ENCODE measurements at regions of chr7 and their contacts with region 1.

Region 1: DNA sequence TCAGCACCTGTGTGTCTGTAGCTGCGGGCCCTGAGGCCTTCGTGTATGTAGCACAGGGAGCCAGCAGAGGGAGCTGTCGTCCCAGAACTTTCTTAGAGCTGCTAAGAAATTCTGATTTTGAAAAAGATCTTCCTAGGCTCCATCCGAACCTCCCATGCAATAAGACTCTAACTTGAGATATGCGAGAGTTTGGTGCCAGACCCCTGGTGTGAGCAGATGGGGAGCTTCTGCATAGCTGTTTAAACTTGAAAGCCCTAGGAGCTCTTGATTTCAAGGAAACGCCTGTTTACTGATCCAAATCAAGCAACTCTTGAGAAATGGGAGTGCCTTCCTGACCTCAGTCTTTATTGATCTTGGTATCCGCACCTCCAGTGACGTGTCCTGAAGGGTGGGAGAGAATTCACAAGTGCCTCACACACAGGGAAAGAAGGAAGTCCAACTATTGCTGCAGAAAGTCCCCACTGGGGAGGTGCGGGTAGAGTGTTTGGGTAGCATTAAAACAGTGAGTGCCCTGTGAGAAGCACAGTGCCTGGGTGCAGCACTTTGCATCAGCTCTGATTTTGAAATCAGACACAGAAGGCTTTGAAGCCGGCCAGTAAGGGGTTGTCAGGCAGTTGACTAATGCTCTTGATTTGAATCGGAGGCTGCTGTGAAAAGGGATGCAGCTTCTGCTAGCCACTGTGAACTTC is 66.4 kb upstream of the STRIP2 start:
- DNase-seq: peak; percentile 64 to 91 (median 78)
- H3K4me3 ChIP-seq: peak overlapping the region in 1 of 4 donors; percentile 17
- H3K27ac ChIP-seq: no peak overlapping the region
- H3K4me1 ChIP-seq: peaks cover 0 to 6% of the 10 kb centered on the region in 2 donors
- H3K27me3 ChIP-seq: no peaks in the 10 kb centered on the region
- CTCF ChIP-seq: peak; percentile 71 to 87 (median 84)
- POLR2A ChIP-seq: no peak

Region 2: GRCh38 chr7:129536323-129536722 is 168.5 kb after region 1 on chr7:
- intact Hi-C with region 1: no loop called
- DNase-seq: no peak
- H3K4me3 ChIP-seq: no peak overlapping the region
- H3K27ac ChIP-seq: no peak overlapping the region
- H3K4me1 ChIP-seq: peaks cover 3 to 5% of the 10 kb centered on the region in 2 donors
- H3K27me3 ChIP-seq: no peaks in the 10 kb centered on the region
- CTCF ChIP-seq: no peak
- POLR2A ChIP-seq: no peak

Region 3: GRCh38 chr7:129644634-129645230 is 276.9 kb after region 1 on chr7:
- intact Hi-C with region 1: loop called in 1 of 2 experiments (anchors 10 kb)
- DNase-seq: no peak
- H3K4me3 ChIP-seq: no peak overlapping the region
- H3K27ac ChIP-seq: no peak overlapping the region
- H3K4me1 ChIP-seq: peaks cover 3 to 13% of the 10 kb centered on the region in 2 donors
- H3K27me3 ChIP-seq: no peaks in the 10 kb centered on the region
- CTCF ChIP-seq: peak; percentile 26 to 55 (median 54)
- POLR2A ChIP-seq: no peak

Measured in adrenal gland (tissue), 19 donors.